Panc1 (cell line): ENCODE measurements at regions of chr16 and their contacts with region 1.

Region 1: GRCh38 chr16:9647981-9648712 is 534.1 kb downstream of the GRIN2A start:
- DNase-seq: peak; percentile 24
- ATAC-seq: peak; percentile 86
- H3K4me3 ChIP-seq: no peak overlapping the region
- H3K27ac ChIP-seq: no peak overlapping the region; the same call in 1 of the 2 replicates
- H3K4me1 ChIP-seq: no peaks in the 10 kb centered on the region
- H3K27me3 ChIP-seq: no peaks in the 10 kb centered on the region
- CTCF ChIP-seq: peak; percentile 85

Region 2: GRCh38 chr16:9836118-9836736 is 188.1 kb after region 1 on chr16:
- CTCF ChIA-PET with region 1: no interaction called
- POLR2A ChIA-PET with region 1: no interaction called
- in situ Hi-C with region 1: no loop called
- intact Hi-C with region 1: loop called (anchors 10 kb)
- DNase-seq: no peak
- ATAC-seq: no peak
- H3K4me3 ChIP-seq: no peak overlapping the region
- H3K27ac ChIP-seq: no peak overlapping the region
- H3K4me1 ChIP-seq: no peaks in the 10 kb centered on the region
- H3K27me3 ChIP-seq: no peaks in the 10 kb centered on the region
- CTCF ChIP-seq: no peak

Region 3: DNA sequence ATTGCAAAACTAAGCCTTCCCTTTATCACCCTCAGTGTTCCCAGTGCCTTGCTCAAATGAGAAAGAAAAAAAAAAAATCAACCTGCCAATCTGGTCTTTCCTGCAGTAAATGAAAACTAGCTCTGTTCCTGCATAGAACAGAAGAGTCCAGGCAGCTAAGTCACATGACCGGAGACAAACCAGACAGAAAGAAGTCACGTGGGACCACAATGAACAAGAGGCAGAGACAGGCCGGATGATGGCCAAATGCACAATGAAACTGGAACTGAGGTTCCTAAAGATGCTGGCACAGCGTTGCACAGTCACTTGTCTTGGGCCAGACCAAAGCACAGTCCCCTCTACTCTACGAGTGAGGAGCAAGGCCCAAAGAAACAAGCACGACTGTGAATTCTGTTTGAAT is 361.5 kb after region 1 on chr16:
- CTCF ChIA-PET with region 1: no interaction called
- POLR2A ChIA-PET with region 1: no interaction called
- in situ Hi-C with region 1: no loop called
- intact Hi-C with region 1: loop called (anchors 10 kb)
- DNase-seq: no peak
- ATAC-seq: no peak
- H3K4me3 ChIP-seq: no peak overlapping the region
- H3K27ac ChIP-seq: no peak overlapping the region
- H3K4me1 ChIP-seq: no peaks in the 10 kb centered on the region
- H3K27me3 ChIP-seq: no peaks in the 10 kb centered on the region
- CTCF ChIP-seq: no peak